HEK293 (cell line): ENCODE measurements at regions of chr13 and their contacts with region 1.

Region 1: DNA sequence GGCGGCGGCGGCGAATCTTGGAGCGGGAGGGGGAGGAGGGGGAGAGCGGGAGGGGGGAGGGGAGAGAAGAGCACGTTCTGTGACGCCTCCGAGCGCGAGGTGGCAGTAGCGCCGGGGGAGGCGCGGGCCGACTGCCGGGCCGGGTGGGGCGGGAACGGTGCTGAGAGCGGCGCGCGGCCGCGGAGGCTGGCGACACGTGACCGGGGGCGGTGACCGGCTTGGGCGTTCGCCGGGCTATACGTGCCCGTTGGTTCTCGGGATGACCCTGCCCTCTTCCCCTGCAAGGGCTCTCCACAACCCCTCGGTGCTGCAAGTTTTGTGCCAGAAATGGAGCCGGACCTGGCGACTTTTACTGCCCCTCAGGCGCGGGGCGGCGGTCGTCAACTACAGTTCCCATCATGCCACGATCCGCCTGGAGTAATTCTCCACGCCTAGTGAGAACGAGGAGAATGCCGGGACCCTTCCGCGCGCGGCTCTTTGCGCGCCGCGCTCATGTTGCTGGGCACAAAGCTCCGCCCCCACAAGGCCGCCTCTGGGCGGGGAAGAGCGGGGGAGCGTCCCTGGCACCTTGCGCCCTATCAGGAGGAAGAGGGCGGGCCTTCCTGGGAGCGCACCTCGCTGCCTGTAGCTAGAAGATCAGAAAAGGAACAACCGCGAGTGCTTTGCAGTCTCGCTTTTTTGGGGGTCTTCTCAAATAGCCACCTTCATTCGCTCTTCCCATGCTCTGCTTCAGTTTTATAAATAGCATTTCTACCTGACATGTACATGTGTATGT is at the start of gene KPNA3:
- H3K4me3 ChIP-seq: peak within 1 kb of the TSS; percentile 80
- H3K27ac ChIP-seq: peak within 1 kb of the TSS; percentile 87
- H3K4me1 ChIP-seq: no peaks in the 10 kb centered on the region
- CTCF ChIP-seq: no peak

Region 2: GRCh38 chr13:49540552-49540951 is 252.2 kb before region 1 on chr13:
- CTCF ChIA-PET with region 1: no interaction called
- POLR2A ChIA-PET with region 1: no interaction called
- H3K4me3 ChIP-seq: no peak overlapping the region
- H3K27ac ChIP-seq: no peak overlapping the region
- H3K4me1 ChIP-seq: no peaks in the 10 kb centered on the region
- CTCF ChIP-seq: no peak

Region 3: DNA sequence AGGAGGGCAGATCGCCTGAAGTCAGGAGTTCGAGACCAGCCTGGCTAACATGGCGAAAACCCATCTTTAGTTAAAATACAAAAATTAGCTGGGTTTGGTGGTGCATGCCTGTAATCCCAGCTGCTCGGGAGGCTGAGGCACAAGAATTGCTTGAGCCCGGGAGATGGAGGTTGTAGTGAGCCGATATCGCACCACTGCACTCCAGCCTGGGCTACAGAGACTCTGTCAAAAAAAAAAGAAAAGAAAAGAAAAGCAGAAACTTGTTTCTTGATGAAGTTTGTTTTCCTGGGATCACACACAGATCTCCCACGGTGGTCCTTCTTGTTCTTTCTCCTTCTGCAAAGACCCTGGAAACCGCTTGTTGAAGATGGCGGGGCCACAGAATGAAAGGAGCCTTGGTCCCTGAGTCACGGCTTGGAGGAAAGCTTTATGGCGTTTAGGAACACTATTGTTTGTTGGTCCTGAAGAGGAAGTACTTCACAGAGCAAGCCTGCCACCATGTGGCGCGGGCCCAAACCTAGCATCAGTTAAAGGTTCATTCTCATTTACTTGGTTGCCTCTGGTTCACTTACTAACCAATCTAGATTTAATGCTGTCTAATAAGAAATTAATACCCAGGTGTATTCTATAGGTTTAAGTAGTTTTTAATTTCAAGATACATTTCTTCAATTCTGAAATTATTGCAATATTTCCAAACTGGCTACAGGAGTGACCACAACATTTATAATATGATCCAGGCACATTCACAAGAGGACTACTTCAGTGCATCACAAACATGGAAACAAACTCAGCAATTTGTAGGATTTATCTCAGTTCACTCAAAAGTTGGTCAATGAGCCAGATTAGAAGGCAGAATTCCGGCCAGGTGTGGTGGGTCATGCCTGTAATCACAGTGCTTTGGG is 185.7 kb before region 1 on chr13:
- CTCF ChIA-PET with region 1: no interaction called
- POLR2A ChIA-PET with region 1: no interaction called
- H3K4me3 ChIP-seq: no peak overlapping the region
- H3K27ac ChIP-seq: no peak overlapping the region
- H3K4me1 ChIP-seq: no peaks in the 10 kb centered on the region
- CTCF ChIP-seq: no peak

Region 4: DNA sequence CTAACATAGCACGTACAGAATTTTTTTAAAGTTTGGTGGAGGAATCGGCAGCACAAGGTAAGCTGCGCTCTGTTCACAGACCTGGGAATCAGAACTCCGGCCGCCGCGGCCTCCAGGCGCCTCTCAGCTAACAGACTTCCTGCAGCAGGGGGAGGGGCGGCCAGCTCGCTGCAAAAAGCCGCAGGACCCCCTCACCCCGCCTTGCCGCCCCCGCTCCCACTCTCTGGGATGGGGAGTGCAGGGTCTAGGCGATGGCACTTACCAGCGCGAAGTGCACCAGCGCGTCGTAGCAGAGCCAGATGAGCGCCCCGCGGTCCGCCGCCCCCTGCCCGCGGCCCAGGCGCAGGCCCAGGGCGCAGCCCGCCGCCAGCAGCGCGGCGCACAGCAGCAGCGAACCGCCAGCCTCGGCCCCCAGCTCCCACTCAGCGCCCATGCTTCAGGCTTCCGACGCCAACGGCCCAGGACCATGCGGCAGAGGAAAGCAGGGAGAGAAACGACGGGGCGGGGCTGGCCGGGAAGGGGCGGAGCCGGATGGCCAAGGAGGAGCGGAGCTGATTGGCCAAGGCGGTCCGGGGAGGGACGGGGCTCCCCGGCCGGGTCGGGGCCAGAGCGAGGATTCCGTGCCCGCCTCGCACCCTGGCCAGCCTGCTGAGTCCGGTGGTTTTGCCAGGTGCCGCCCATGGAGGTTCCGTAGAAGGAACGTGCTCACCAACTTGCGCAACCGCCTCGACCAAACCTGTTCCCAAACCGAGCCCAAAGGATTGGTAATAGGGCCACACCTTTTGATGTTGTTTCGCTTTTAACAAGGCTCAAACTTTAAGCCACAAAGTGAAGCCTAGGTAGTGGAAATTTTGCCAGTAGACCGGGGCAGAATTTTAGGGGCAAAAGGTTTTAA is 101.5 kb before region 1 on chr13 and contains the start of gene EBPL:
- CTCF ChIA-PET with region 1: no interaction called
- POLR2A ChIA-PET with region 1: interaction called, 18 read pairs
- H3K4me3 ChIP-seq: peak within 1 kb of the TSS; percentile 59
- H3K27ac ChIP-seq: peak within 1 kb of the TSS; percentile 83
- H3K4me1 ChIP-seq: no peaks in the 10 kb centered on the region
- CTCF ChIP-seq: no peak

Region 5: GRCh38 chr13:50081679-50082425 is 289.1 kb after region 1 on chr13:
- CTCF ChIA-PET with region 1: no interaction called
- POLR2A ChIA-PET with region 1: no interaction called
- H3K4me3 ChIP-seq: peak overlapping the region; percentile 99
- H3K27ac ChIP-seq: peak overlapping the region; percentile 100
- H3K4me1 ChIP-seq: peaks cover 9% of the 10 kb centered on the region
- CTCF ChIP-seq: no peak; the same call in 1 of the 2 replicates